ENCODE measurements at regions of chr15 and their contacts with region 1.

Region 1: DNA sequence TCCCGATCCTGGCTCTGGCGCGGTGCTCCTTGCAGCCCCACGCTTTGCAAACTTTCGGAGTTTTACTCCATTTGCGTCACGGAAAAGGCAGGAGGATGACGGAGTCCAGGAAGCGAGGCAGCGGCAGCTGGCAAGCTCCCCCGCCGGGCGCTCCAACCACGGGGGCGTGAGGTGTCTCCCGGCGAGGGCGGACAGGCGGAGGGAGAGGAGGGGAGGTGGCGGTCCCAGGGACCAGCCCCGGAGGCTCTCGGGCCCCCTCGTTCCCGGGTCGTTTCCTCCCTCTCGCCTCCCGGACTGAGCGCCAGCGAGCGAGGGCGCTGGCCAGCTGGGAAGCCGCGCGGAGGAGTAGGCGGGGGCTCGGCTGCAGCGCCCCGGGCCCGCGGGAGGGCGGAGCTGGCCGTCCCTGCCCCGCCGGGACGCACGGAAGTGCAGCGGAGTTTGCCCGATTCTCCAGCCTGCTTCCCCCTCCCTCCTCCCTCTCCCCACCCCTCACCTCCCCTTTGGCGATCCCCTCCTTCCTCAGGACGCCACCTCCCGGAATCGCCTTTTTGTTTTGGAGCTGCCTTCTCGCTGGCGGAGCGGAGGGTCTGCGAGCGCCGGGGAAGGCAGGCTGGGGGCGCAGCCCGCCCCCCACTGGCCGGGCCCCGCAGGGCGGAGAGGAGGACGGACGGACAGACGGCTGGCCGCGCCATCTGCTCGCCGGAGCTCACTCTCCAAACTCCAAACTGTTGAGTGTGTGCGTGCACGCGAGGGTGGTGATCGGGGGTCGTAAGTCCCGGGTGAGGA is at the start of gene SNX33:
- DNase-seq: peak; percentile 46
- ATAC-seq: peak; percentile 70
- H3K4me3 Mint-ChIP-seq: peak within 1 kb of the TSS; percentile 85
- H3K27ac Mint-ChIP-seq: peak within 1 kb of the TSS; percentile 16
- H3K4me1 Mint-ChIP-seq: peaks cover 8% of the 10 kb centered on the region
- H3K27me3 Mint-ChIP-seq: peaks cover 18% of the 10 kb centered on the region
- CTCF ChIP-seq: no peak
- total RNA-seq, gene SNX33: 0.22 and 0.34 TPM in 2 replicates

Region 2: DNA sequence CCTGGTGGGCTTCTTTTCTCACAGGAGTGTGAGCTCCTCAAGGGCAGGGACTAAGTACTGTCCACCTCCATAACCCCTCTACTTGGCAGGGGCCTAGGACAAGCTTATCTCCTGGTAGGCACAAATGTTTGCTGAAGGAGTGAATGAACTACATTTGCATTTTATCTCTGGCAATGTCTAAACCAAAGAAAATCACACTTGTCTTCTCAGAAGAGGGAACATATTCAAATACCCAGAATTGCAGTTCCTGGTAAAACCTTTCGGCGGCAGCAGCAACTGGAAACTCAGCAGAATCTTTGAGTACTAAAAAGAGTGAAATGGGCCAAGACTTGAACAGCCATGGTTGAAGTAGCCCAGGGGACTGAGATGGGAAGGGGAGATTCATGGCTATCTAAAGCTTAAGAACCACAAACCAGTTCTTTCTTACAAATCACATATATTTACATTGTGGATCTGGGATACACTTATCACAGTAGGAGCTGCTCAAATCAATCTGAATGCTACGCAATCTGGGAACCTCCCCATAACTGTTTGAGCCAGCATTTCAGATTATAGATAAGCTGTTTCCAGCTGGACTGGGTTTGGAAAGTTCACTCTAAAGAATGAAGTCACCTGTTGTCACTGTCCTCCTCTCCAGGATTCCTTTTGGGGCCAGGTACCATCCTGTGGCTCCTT is 49.8 kb before region 1 on chr15:
- CTCF ChIA-PET with region 1: no interaction called
- POLR2A ChIA-PET with region 1: interaction called, 14 read pairs
- intact Hi-C with region 1: no loop called
- DNase-seq: no peak
- ATAC-seq: no peak
- H3K4me3 Mint-ChIP-seq: no peak overlapping the region
- H3K27ac Mint-ChIP-seq: no peak overlapping the region
- H3K4me1 Mint-ChIP-seq: no peaks in the 10 kb centered on the region
- H3K27me3 Mint-ChIP-seq: no peaks in the 10 kb centered on the region
- CTCF ChIP-seq: no peak

Measured in activated B cell treated with CpG ODN at 0.5 μM for 24 hours (primary cell).